ENCODE measurements at regions of chr16 and their contacts with region 1.

Region 1: GRCh38 chr16:10181196-10182162 is 749 bp downstream of the GRIN2A start:
- DNase-seq: no peak
- H3K4me3 ChIP-seq: peak overlapping the region; percentile 53 to 62 (median 56)
- H3K27ac ChIP-seq: peak overlapping the region; percentile 9 to 60 (median 38)
- H3K4me1 ChIP-seq: peaks cover 24 to 45% (median 36%) of the 10 kb centered on the region in 4 donors
- H3K27me3 ChIP-seq: peaks cover 0 to 36% (median 4%) of the 10 kb centered on the region in 4 donors
- CTCF ChIP-seq: peak; percentile 73 to 97 (median 93)
- EP300 ChIP-seq: no peak
- POLR2A ChIP-seq: no peak

Region 2: DNA sequence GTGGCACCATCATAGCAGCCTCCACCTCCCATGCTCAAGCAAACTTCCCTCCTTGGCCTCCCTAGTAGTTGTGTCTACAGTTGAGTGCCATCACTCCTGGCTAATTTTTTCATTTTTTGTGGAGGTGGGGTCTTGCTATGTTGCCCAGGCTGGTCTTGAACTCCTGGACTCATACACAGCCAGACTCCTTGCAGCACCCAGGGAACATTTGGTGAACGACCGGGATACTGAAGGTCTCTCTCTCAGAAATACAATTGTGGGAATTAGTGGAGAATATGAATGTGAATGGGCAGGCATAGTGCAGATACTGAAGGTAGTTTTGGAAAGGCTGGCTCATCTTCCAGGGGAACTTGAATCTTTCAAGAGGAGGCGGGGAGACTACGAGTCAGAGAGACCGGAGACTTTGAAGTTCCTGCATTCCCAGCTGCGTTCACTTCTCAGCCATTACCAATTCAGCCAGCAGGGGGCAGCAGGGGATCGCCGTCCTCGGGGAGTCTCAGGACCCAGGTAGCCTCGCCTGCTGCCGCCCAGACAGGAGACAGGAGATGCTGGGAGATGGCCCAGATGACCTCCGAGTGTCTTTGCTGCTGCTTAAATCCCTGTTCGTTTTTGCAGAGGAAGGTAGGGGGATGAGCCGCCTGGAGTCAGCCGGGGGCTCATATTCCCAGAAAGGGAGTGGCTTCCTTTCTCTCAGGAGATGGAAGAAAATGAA is 1021.5 kb before region 1 on chr16:
- intact Hi-C with region 1: loop called (anchors 10 kb)
- DNase-seq: no peak
- H3K4me3 ChIP-seq: no peak overlapping the region
- H3K27ac ChIP-seq: no peak overlapping the region
- H3K4me1 ChIP-seq: peaks cover 0 to 5% (median 0%) of the 10 kb centered on the region in 4 donors
- H3K27me3 ChIP-seq: peaks cover 0 to 19% (median 0%) of the 10 kb centered on the region in 4 donors
- CTCF ChIP-seq: peak; percentile 37 to 80 (median 42)
- EP300 ChIP-seq: no peak
- POLR2A ChIP-seq: no peak

Region 3: DNA sequence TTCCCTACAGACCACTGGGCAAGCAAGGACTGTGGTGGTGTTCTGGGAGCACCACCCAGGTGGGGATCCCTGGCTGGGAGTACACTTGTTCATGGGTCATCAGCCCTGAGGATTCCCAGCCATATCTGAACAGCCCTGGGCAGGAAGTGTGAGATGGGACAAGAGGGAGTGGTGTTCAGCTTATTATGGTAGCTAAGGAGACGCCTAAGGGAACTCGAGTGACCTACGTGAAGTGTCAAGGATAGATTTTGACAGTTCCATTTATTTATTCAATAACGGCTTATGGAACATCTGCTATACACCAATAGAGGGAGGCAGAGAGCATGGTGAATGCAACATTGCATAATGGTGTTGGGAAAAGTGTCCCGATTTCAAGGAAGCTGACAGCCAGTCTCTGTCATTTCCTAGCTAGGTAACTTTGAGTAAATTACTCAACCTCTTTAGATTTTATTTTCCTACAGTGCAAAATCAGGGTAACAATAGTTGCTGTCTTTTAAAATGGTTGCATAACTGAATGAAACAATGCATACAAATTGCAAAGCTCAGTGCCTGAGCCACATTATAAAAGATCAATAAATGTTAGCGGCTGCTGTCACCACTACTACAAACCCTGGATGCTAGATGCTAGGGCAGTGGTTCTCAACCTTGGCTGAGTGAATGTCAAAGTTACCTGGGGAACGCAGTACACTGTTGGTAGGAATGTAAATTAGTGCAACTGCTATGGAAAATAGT is 533.3 kb before region 1 on chr16:
- intact Hi-C with region 1: loop called (anchors 5 kb)
- DNase-seq: peak; percentile 45
- H3K4me3 ChIP-seq: no peak overlapping the region
- H3K27ac ChIP-seq: no peak overlapping the region
- H3K4me1 ChIP-seq: peaks cover 0 to 6% (median 2%) of the 10 kb centered on the region in 4 donors
- H3K27me3 ChIP-seq: no peaks in the 10 kb centered on the region
- CTCF ChIP-seq: peak; percentile 62 to 74 (median 70)
- EP300 ChIP-seq: no peak
- POLR2A ChIP-seq: no peak

Region 4: DNA sequence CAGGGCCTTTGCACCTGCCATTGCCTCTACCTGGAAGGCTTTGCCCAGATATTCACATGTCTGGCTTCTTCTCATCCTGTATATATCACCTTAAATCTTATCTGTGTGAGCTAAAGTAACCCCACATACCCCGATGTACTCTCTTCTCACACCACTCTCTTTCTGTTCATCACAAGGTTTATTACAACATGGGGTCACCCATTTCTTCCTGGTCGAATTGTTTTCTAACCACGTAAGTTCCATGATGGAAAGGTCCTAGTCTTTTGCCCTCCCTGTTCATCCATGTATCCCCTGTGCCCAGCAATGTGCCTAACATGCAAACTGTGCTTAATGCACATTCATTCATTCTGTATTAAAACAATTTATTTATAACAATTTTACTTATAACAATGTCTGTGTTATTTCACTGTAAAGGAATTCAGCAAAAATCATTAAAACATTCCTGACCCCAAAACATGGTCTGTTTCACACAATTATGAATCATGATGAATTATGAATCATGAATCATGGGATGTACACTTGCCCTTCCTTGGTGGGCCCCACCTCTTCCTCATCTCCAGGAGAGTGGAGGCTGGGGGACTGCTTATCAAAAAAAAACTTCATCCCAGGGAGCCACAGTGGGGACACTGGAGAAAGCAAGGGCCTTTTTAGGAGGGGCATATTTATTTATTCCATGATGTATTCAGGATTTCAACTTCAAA is 335.7 kb before region 1 on chr16:
- intact Hi-C with region 1: loop called (anchors 10 kb)
- DNase-seq: peak; percentile 84
- H3K4me3 ChIP-seq: no peak overlapping the region
- H3K27ac ChIP-seq: no peak overlapping the region
- H3K4me1 ChIP-seq: no peaks in the 10 kb centered on the region
- H3K27me3 ChIP-seq: no peaks in the 10 kb centered on the region
- CTCF ChIP-seq: no peak
- EP300 ChIP-seq: no peak
- POLR2A ChIP-seq: no peak

Region 5: DNA sequence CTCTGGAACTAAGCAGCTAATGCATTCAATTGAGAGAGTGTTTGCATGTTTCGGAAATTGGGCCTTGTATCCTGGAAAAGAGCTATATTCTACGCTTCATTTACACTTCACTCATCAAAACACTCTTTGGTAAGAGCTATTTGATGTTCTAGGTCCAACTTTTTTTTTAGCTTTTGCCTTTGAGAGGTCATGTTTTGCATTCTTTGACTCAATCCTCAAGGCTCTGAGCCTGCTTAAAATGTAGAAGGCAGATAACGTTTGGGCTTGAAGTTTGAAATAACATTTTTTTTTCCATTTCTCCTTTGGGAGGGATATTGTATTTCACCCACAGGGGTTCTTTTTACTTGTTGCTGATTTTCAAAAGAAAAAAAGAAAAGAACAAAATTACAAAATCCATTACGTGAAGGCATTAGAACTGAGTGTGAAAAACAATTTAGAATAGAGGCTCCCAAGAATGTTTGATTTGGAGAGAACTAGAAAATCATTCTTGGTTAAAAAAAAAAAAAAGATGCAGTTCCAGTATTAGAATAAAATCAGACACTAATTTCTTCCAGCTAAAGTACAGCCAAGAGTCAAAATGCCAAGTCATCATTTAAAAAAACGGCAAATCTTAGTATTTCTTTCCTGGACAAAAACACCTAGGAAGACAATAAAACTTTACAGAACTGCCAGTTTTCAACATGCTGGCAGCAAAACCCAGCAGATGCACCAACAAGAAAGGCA is 267.7 kb before region 1 on chr16:
- intact Hi-C with region 1: loop called (anchors 10 kb)
- DNase-seq: no peak
- H3K4me3 ChIP-seq: no peak overlapping the region
- H3K27ac ChIP-seq: peak overlapping the region; percentile 2 to 49 (median 19)
- H3K4me1 ChIP-seq: peaks cover 0 to 18% (median 13%) of the 10 kb centered on the region in 4 donors
- H3K27me3 ChIP-seq: no peaks in the 10 kb centered on the region
- CTCF ChIP-seq: no peak
- EP300 ChIP-seq: no peak
- POLR2A ChIP-seq: no peak

Region 6: DNA sequence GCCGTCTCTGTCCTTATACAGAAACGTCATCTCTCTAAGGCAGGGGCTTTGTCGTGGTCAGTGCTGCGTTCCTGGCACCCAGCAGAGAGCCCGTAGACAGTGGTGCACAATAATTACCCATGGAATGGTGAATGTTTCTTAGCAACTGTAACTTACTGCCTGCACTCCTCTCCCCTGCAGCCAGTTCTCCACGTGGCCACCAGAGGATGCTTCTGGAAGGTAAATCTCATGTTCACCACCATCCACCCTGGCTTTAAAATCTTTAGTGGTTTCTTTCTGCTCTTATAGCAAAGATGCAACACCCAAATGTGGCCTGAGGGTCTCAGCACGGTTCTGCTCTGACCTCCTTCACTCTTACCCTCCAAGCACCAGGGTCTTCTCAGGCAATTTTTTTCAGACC is 150.0 kb before region 1 on chr16:
- intact Hi-C with region 1: loop called (anchors 2 kb)
- DNase-seq: no peak
- H3K4me3 ChIP-seq: no peak overlapping the region
- H3K27ac ChIP-seq: no peak overlapping the region
- H3K4me1 ChIP-seq: peaks cover 0 to 4% (median 2%) of the 10 kb centered on the region in 4 donors
- H3K27me3 ChIP-seq: no peaks in the 10 kb centered on the region
- CTCF ChIP-seq: peak; percentile 30 to 60 (median 35)
- EP300 ChIP-seq: no peak
- POLR2A ChIP-seq: no peak

Region 7: DNA sequence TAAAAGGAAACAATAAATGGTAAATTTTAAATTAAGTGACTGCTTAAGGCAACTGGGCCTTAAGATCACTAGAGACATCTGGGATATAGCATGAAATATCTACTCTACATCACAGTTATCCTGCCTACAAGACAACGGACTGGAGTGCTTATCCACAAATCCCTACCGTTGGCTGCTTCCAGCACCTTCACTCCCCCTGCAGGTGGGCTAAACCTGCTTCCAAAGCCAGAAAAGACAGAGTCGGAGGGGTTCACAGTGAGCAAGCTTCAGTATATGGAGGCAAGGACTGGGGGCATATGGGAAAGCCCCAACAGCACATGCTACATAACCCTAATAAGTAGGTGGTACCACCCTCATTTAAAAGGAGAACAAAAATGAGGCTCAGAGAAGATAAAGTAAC is 44.6 kb before region 1 on chr16:
- intact Hi-C with region 1: no loop called
- DNase-seq: no peak
- H3K4me3 ChIP-seq: no peak overlapping the region
- H3K27ac ChIP-seq: no peak overlapping the region
- H3K4me1 ChIP-seq: peaks cover 0 to 7% (median 4%) of the 10 kb centered on the region in 4 donors
- H3K27me3 ChIP-seq: no peaks in the 10 kb centered on the region
- CTCF ChIP-seq: no peak
- EP300 ChIP-seq: no peak
- POLR2A ChIP-seq: no peak

Measured in esophagus muscularis mucosa (tissue), 4 donors.